ENCODE measurements at regions of chr2 and their contacts with region 1.

Region 1: DNA sequence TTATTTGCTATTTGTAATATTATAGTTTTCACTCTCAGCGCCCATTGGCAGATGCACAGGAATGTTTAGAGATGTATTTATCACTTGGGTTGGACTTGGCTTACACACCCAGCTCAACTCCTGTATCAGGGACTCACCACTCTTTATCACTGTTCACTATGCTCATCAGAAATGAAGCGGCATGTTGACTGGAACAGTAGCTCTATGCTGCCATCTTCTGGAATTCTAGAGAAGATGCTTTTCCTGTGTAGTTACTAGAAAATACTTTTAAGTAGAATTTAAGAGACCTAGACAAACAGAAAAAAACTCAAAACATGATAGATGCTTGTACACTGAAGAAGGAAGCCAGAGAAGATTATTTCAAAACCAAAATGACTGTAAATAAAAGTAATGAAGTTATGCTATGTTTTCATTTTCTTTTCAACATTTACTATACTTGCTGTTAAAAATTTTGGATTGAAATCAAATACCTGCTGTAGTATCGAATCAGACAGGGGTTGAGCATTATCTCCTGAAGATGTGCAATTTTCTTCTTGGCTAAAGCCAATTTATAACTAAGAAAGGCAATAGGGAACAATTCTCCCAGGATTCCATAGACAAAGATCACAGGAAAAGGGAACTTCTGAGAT is 47.4 kb upstream of the NXPH2 start:
- DNase-seq: peak; percentile 77
- ATAC-seq: peak; percentile 81
- H3K4me3 ChIP-seq: no peak overlapping the region
- H3K27ac ChIP-seq: no peak overlapping the region
- H3K4me1 ChIP-seq: no peaks in the 10 kb centered on the region
- H3K27me3 ChIP-seq: no peaks in the 10 kb centered on the region
- CTCF ChIP-seq: peak; percentile 53 to 74 (median 62); a peak in 5 of 6 replicates
- POLR2A ChIP-seq: no peak
- RAD21 ChIP-seq: peak; percentile 77

Region 2: DNA sequence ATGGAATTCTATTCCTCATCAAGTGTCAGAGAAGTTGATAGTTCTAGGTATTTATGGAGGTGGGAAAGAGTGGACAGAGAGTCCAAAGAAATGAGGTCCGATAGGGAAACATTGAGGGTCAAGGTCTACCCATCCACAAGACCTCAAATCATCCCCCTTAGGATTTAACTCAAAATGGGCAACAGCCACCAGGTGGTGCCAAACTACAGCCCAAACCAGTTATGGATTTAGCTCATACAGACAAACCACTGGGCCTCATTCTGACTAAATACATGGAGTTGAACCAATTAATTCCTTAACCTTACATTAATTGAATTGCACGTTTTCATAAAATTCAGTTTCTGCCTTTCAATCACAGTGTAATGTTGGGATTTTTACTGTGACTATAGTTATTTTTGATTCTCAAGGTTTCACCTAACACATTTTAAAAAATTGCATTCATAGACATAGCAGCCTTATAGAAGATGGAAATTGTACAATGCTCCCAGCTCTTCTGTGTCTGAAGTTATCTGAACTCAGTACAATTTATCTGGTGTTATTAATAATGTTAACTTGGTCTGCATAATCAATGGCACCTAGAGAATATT is 961.5 kb before region 1 on chr2:
- CTCF ChIA-PET with region 1: interaction called, 16 read pairs
- POLR2A ChIA-PET with region 1: no interaction called
- RAD21 ChIA-PET with region 1: interaction called, 3 to 7 read pairs
- intact Hi-C with region 1: loop called (anchors 1 kb)
- DNase-seq: peak; percentile 53
- ATAC-seq: peak; percentile 91
- H3K4me3 ChIP-seq: no peak overlapping the region
- H3K27ac ChIP-seq: no peak overlapping the region
- H3K4me1 ChIP-seq: no peaks in the 10 kb centered on the region
- H3K27me3 ChIP-seq: no peaks in the 10 kb centered on the region
- CTCF ChIP-seq: peak; percentile 62 to 81 (median 77); a peak in 5 of 6 replicates
- POLR2A ChIP-seq: no peak
- RAD21 ChIP-seq: peak; percentile 82

Region 3: GRCh38 chr2:137910641-137911040 is 916.9 kb before region 1 on chr2:
- CTCF ChIA-PET with region 1: interaction called, 40 read pairs
- POLR2A ChIA-PET with region 1: no interaction called
- RAD21 ChIA-PET with region 1: interaction called, 4 read pairs
- intact Hi-C with region 1: loop called (anchors 1 kb)
- DNase-seq: peak; percentile 8
- ATAC-seq: no peak
- H3K4me3 ChIP-seq: no peak overlapping the region
- H3K27ac ChIP-seq: no peak overlapping the region
- H3K4me1 ChIP-seq: no peaks in the 10 kb centered on the region
- H3K27me3 ChIP-seq: no peaks in the 10 kb centered on the region
- CTCF ChIP-seq: peak; percentile 34 to 73 (median 67); a peak in 4 of 6 replicates
- POLR2A ChIP-seq: no peak
- RAD21 ChIP-seq: peak; percentile 78

Region 4: DNA sequence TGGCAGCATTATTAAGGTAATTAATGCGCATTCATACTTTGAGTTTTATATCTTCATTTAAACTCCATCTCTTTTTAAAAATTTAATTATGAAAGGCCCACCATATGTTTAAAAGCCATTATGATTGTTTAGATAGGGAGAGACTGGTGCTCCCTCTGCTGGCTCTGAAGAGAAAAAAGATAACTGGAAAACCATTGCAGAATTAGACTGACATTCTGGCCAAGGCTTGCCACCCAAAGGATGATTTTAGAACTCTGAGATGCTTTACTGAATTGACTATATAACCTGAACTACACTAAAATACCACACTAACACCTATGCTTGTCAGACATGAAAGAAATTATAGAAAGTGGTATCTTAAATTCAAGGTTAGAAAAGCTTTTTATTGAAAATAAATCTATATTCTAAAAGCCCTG is 453.5 kb before region 1 on chr2:
- CTCF ChIA-PET with region 1: no interaction called
- POLR2A ChIA-PET with region 1: no interaction called
- RAD21 ChIA-PET with region 1: no interaction called
- intact Hi-C with region 1: loop called (anchors 10 kb)
- DNase-seq: peak; percentile 27
- ATAC-seq: peak; percentile 57; the same call in 1 of the 2 replicates
- H3K4me3 ChIP-seq: no peak overlapping the region
- H3K27ac ChIP-seq: no peak overlapping the region
- H3K4me1 ChIP-seq: no peaks in the 10 kb centered on the region
- H3K27me3 ChIP-seq: no peaks in the 10 kb centered on the region
- CTCF ChIP-seq: peak; percentile 63 to 84 (median 78)
- POLR2A ChIP-seq: no peak
- RAD21 ChIP-seq: peak; percentile 78

Region 5: GRCh38 chr2:138752197-138752956 is 75.2 kb before region 1 on chr2:
- CTCF ChIA-PET with region 1: no interaction called
- POLR2A ChIA-PET with region 1: no interaction called
- RAD21 ChIA-PET with region 1: no interaction called
- intact Hi-C with region 1: no loop called
- DNase-seq: peak; percentile 35
- ATAC-seq: peak; percentile 91
- H3K4me3 ChIP-seq: no peak overlapping the region
- H3K27ac ChIP-seq: no peak overlapping the region; the same call in 1 of the 2 replicates
- H3K4me1 ChIP-seq: peaks cover 0 to 10% of the 10 kb centered on the region in 2 experiments; a peak in 2 of 4 replicates
- H3K27me3 ChIP-seq: no peaks in the 10 kb centered on the region
- CTCF ChIP-seq: no peak
- POLR2A ChIP-seq: no peak
- RAD21 ChIP-seq: no peak

Region 6: DNA sequence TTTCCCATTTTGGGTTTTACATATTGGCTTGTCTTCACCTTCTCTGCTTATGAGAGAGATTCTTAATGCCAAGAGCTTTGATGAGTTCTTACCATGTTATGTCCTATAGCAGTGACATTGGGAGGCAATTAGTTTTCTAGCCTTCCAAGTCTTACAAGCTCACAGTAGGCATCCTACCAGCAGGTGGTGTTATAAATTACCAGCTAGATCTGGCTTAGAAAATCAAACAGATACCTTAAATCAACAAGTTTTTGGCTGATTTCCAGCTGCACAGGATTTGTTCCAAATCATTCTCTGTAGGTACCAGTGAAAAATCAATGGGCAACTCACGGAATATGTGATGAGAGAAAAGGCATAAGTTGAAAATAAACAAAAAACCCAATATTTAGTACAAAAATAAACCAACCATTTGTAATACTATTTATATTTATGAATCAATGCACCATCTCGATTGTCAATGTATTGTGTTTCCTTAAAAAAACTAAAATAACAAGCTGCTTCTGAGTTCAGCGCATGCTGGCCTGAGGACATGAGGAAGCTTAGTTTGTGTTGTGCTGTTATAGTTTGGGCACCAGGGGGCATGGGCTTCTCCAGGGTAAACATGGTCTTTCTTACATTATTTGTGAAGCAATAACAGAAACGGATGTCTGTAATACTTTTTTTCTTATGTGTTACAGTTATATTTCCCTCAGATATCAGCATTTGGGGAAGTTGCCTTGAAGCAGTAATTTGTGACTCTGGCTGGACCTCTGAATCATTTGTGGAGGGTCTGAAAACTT is 13.2 kb before region 1 on chr2:
- CTCF ChIA-PET with region 1: interaction called, 28 read pairs
- POLR2A ChIA-PET with region 1: no interaction called
- RAD21 ChIA-PET with region 1: interaction called in 1 of 2 experiments, 3 read pairs
- intact Hi-C with region 1: no loop called
- DNase-seq: peak; percentile 13
- ATAC-seq: peak; percentile 80
- H3K4me3 ChIP-seq: no peak overlapping the region
- H3K27ac ChIP-seq: no peak overlapping the region
- H3K4me1 ChIP-seq: no peaks in the 10 kb centered on the region
- H3K27me3 ChIP-seq: no peaks in the 10 kb centered on the region
- CTCF ChIP-seq: peak; percentile 14 to 55 (median 53); a peak in 4 of 6 replicates
- POLR2A ChIP-seq: no peak
- RAD21 ChIP-seq: no peak

Measured in HCT116 (cell line).